ENCODE measurements at regions of chr6 and their contacts with region 1.

Region 1: DNA sequence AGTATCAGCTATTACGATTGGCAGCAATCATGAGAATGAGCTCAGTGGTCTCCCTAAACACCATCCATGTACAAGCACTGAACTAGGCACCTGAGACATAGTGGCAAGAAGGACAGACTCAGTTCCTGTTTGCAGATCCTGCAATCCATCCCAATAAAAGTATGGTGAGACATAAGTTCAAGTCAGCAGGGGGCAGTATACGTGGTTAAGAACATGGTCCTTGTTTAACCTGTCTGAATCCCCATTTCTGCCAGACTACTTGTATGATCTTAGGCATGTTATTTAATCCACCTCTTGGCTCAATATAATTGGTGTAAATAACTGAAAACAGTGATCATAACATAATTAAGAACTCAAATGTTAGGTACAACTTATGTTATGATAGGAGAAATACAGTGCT is 33.2 kb upstream of the PNISR start:
- DNase-seq: no peak

Region 2: GRCh38 chr6:99434702-99435530 is 23.4 kb before region 1 on chr6:
- intact Hi-C with region 1: loop called (anchors 2 kb)
- DNase-seq: no peak

Measured in posterior cingulate gyrus (tissue), 11 donors.